Activated CD4-positive, alpha-beta T cell treated with anti-CD3 and anti-CD28 coated beads, Interleukin-2, amount 10 ng/mL, durations not matched to agents 7 days and 5 days (primary cell): ENCODE measurements at regions of chr9 and their contacts with region 1.

Region 1: DNA sequence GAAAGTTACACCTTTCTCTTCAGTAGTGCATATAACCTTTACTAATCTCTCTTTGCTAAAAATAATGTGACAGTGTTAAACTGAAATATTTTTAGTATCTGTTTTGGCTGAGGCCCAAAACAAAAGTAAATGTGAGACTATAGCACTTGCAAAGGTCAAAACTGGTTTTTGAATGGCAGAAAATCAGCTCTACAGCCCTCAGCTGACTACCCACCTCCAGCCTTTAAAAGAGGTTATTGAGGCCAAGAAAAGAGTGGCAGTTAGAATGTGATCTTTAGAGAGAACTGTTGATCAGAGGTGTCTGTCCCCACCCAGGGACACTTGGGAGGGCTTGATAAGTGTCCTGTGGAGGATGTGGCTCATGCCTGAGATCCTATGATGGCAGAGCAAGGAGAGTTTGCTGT is 30.9 kb downstream of the PRKACG start:
- DNase-seq: no peak
- H3K4me3 Mint-ChIP-seq: no peak overlapping the region
- H3K27ac Mint-ChIP-seq: peak overlapping the region; percentile 4
- H3K4me1 Mint-ChIP-seq: peaks cover 52% of the 10 kb centered on the region
- H3K27me3 Mint-ChIP-seq: no peaks in the 10 kb centered on the region

Region 2: DNA sequence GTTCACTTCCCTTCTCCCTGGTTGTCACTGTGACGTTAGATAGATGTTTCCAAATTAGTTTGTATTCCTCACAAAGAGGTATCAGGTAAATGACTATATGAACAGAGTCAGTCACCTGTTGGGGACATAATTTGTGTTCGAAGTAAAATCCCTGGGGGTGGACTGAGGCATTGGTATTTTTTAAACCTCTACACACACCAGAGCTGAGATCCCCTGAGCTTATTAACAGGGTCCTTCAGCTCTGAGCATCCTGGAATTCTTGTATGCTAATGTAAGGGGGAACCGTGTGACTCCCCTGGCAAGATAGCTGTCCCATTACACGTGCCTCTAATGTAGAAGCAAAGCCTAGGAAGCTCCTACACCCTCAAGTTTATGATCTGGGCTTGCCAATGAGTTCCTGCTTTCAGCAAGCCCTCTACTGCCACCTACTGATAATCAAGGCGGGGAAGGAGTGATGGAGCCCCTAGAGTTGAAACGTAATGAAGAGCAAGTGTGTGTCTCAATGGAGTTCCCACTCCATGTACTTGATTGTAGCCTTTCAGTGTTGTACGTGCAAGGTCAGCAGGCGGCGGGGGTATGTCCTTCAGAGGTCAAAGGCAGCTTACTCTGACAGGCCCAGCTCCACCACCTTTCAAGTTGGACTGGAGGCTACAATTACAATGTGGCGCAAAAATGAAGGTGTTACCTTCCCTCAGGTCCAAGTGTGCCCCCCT is 16.5 kb after region 1 on chr9:
- CTCF ChIA-PET with region 1: interaction called, 14 read pairs
- POLR2A ChIA-PET with region 1: no interaction called
- DNase-seq: peak; percentile 82
- H3K4me3 Mint-ChIP-seq: no peak overlapping the region
- H3K27ac Mint-ChIP-seq: no peak overlapping the region
- H3K4me1 Mint-ChIP-seq: peaks cover 25% of the 10 kb centered on the region
- H3K27me3 Mint-ChIP-seq: peaks cover 2% of the 10 kb centered on the region

Region 3: DNA sequence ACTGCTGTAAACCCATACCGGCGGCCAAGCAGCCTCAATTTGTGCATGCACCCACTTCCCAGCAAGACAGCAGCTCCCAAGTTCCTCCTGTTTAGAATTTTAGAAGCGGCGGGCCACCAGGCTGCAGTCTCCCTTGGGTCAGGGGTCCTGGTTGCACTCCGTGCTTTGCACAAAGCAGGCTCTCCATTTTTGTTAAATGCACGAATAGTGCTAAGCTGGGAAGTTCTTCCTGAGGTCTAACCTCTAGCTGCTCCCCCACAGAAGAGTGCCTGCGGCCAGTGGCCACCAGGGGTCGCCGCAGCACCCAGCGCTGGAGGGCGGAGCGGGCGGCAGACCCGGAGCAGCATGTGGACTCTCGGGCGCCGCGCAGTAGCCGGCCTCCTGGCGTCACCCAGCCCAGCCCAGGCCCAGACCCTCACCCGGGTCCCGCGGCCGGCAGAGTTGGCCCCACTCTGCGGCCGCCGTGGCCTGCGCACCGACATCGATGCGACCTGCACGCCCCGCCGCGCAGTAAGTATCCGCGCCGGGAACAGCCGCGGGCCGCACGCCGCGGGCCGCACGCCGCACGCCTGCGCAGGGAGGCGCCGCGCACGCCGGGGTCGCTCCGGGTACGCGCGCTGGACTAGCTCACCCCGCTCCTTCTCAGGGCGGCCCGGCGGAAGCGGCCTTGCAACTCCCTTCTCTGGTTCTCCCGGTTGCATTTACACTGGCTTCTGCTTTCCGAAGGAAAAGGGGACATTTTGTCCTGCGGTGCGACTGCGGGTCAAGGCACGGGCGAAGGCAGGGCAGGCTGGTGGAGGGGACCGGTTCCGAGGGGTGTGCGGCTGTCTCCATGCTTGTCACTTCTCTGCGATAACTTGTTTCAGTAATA is 52.7 kb after region 1 on chr9 and contains the start of gene FXN:
- CTCF ChIA-PET with region 1: no interaction called
- POLR2A ChIA-PET with region 1: no interaction called
- DNase-seq: peak; percentile 79
- H3K4me3 Mint-ChIP-seq: peak within 1 kb of the TSS; percentile 87
- H3K27ac Mint-ChIP-seq: peak within 1 kb of the TSS; percentile 92
- H3K4me1 Mint-ChIP-seq: peaks cover 33% of the 10 kb centered on the region
- H3K27me3 Mint-ChIP-seq: no peaks in the 10 kb centered on the region
- total RNA-seq, gene FXN: 27.2 to 32.0 TPM